ENCODE measurements at regions of chr19 and their contacts with region 1.

Region 1: GRCh38 chr19:11374433-11375142 is at the start of gene SWSAP1:
- DNase-seq: peak; percentile 100
- H3K4me3 ChIP-seq: peak within 1 kb of the TSS; percentile 53 to 66 (median 63)
- H3K27ac ChIP-seq: peak within 1 kb of the TSS; percentile 87 to 95 (median 93)
- H3K4me1 ChIP-seq: peaks cover 2 to 45% (median 42%) of the 10 kb centered on the region in 4 donors
- H3K27me3 ChIP-seq: no peaks in the 10 kb centered on the region
- CTCF ChIP-seq: no peak
- EP300 ChIP-seq: no peak
- POLR2A ChIP-seq: peak; percentile 23
- total RNA-seq, gene SWSAP1: 0.71 to 1.8 (median 0.96) TPM

Region 2: DNA sequence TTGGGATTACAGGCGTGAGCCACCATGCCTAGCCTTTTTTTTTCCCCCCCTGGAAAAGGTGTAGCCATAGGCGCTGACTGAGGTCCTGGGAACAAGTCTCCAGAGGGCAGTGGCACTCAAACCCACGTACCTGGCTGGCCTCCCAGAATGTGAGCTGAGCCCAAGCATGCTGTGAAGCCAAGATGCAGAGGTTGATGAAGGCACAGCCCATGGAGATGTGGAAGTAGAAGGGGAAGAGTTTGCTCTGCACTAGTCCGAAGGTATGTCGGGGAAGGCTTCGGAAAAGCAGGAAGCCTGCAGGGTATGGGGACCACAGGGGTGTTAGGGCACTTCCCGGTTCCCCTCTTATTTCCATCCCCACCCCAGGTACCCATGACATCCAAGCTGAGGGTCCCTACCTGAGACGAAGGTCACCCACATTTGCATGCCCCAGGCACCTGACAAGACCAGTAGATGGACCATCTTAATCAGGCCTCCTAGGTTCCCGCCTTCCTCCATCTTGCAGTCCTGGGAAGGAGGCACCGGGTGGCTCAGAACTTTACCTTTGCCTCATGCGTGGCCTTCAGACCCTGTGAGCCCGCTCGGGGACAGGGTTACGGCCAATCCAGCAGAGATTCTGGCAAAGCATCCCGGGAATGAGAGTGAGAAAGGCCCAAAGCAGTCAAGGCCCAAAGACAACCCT is 29.3 kb before region 1 on chr19:
- intact Hi-C with region 1: loop called (anchors 2 kb)
- DNase-seq: no peak
- H3K4me3 ChIP-seq: peak overlapping the region; percentile 58 to 82 (median 74)
- H3K27ac ChIP-seq: peak overlapping the region; percentile 84 to 94 (median 92)
- H3K4me1 ChIP-seq: peaks cover 0 to 34% (median 31%) of the 10 kb centered on the region in 4 donors
- H3K27me3 ChIP-seq: no peaks in the 10 kb centered on the region
- CTCF ChIP-seq: no peak
- EP300 ChIP-seq: no peak
- POLR2A ChIP-seq: no peak

Region 3: GRCh38 chr19:11597202-11598102 is 222.9 kb after region 1 on chr19 and contains the start of gene ZNF627:
- intact Hi-C with region 1: loop called (anchors 10 kb)
- DNase-seq: peak; percentile 100
- H3K4me3 ChIP-seq: peak within 1 kb of the TSS; percentile 82 to 99 (median 95)
- H3K27ac ChIP-seq: peak within 1 kb of the TSS; percentile 90 to 97 (median 94)
- H3K4me1 ChIP-seq: peaks cover 0 to 26% (median 20%) of the 10 kb centered on the region in 4 donors
- H3K27me3 ChIP-seq: no peaks in the 10 kb centered on the region
- CTCF ChIP-seq: peak in 1 of 4 experiments; percentile 19
- EP300 ChIP-seq: peak in 1 of 4 donors; percentile 55
- POLR2A ChIP-seq: peak; percentile 97 to 98
- total RNA-seq, gene ZNF627: 7.9 to 13.8 (median 11.9) TPM